A549 (cell line): ENCODE measurements at regions of chr1 and their contacts with region 1.

Region 1: GRCh38 chr1:11719313-11720032 is 16.5 kb upstream of the AGTRAP start:
- DNase-seq: peak in 1 of 2 experiments; percentile 53
- ATAC-seq: peak; percentile 78 to 80
- H3K4me3 ChIP-seq: peak overlapping the region; percentile 32
- H3K27ac ChIP-seq: peak overlapping the region; percentile 52 to 79; a peak in 5 of 6 replicates
- H3K4me1 ChIP-seq: no peaks in the 10 kb centered on the region
- CTCF ChIP-seq: peak; percentile 77
- EP300 ChIP-seq: no peak
- POLR2A ChIP-seq: no peak
- RAD21 ChIP-seq: peak; percentile 84 to 86

Region 2: GRCh38 chr1:11658308-11658941 is 61.0 kb before region 1 on chr1:
- CTCF ChIA-PET with region 1: interaction called, 107 read pairs
- POLR2A ChIA-PET with region 1: no interaction called
- DNase-seq: no peak
- ATAC-seq: no peak
- H3K4me3 ChIP-seq: no peak overlapping the region
- H3K27ac ChIP-seq: no peak overlapping the region
- H3K4me1 ChIP-seq: peaks cover 14% of the 10 kb centered on the region; the same call in 2 of the 3 replicates
- CTCF ChIP-seq: no peak
- EP300 ChIP-seq: no peak
- POLR2A ChIP-seq: no peak
- RAD21 ChIP-seq: no peak

Region 3: GRCh38 chr1:11693024-11693590 is 26.4 kb before region 1 on chr1:
- CTCF ChIA-PET with region 1: interaction called, 14 read pairs
- POLR2A ChIA-PET with region 1: no interaction called
- DNase-seq: peak in 1 of 2 experiments; percentile 28
- ATAC-seq: peak; percentile 43 to 50; a peak in 3 of 6 replicates
- H3K4me3 ChIP-seq: no peak overlapping the region
- H3K27ac ChIP-seq: no peak overlapping the region
- H3K4me1 ChIP-seq: no peaks in the 10 kb centered on the region
- CTCF ChIP-seq: no peak
- EP300 ChIP-seq: no peak
- POLR2A ChIP-seq: no peak
- RAD21 ChIP-seq: no peak

Region 4: DNA sequence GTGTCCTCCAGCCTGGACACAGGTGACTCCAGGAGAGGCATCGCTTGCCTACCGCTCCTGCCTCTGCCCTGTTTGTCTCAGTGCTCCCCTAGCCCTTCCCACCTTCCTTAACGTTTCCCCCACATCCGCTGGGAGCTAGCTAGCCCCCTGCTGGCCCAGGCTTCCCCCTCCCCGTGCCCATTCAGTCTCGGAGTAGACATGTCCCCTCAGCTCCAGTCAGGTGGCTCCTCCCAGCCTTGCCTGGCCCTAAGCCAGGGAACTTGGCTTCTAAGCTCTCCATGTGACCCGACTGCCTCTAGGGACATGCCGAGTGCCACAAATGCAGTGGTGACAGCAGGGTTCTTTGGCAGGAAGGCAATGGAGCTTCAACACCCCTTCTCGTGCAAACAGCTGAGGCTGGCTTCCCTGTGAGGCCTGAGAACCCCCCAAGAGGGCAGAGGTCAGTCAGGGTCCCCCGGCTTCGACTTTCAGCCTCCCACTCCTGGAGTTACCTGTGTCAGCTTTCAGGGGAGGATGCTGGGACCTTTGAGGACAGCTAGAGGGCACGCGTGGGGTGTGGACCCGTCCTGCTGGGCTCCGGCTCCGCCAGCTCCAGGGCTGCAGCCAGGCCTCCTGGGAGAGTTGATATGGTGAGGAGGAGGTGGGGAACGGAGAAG is 11.7 kb before region 1 on chr1:
- CTCF ChIA-PET with region 1: interaction called, 24 read pairs
- POLR2A ChIA-PET with region 1: no interaction called
- DNase-seq: no peak
- ATAC-seq: peak in 1 of 2 experiments; percentile 46; a peak in 3 of 6 replicates
- H3K4me3 ChIP-seq: no peak overlapping the region
- H3K27ac ChIP-seq: no peak overlapping the region
- H3K4me1 ChIP-seq: 0 out of 3 replicates have a peak, but pooled peaks cover 4% of the 10 kb centered on the region
- CTCF ChIP-seq: no peak
- EP300 ChIP-seq: no peak
- POLR2A ChIP-seq: no peak
- RAD21 ChIP-seq: no peak

Region 5: DNA sequence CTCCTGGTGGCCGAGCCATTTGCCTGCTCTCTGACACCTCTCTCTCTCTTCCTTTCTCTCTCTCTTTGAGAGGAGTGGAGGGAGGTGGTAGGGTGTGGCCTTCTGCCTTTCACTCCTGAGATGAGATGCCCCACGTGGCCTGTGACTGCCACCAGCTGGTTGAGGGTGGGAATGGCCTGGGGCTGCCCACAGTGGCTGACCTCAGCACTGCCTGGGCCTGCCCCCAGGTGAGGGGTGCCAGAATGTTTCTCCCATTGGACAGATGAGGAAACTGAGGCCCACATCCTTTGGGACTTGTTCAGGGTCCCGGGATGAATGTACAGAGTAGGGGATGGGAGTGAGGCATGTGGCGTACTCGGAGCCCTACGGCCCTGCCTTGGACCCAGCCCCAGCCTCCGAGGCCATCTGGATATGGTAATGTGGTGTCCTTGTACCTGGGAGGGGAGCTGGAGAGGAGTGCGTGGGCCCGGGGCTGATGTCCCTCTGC is 29.8 kb after region 1 on chr1:
- CTCF ChIA-PET with region 1: interaction called, 15 read pairs
- POLR2A ChIA-PET with region 1: no interaction called
- DNase-seq: peak; percentile 59 to 79
- ATAC-seq: peak; percentile 89 to 96
- H3K4me3 ChIP-seq: no peak overlapping the region
- H3K27ac ChIP-seq: peak overlapping the region in 1 of 2 experiments; percentile 60; a peak in 2 of 6 replicates
- H3K4me1 ChIP-seq: no peaks in the 10 kb centered on the region; the same call in 2 of the 3 replicates
- CTCF ChIP-seq: peak; percentile 44
- EP300 ChIP-seq: no peak
- POLR2A ChIP-seq: no peak
- RAD21 ChIP-seq: peak; percentile 56 to 69; a peak in 4 of 5 replicates